Heart right ventricle (tissue), 16 donors: ENCODE measurements at regions of chrX and their contacts with region 1.

Region 1: GRCh38 chrX:75337525-75337924 is 63.6 kb downstream of the UPRT start:
- DNase-seq: no peak
- ATAC-seq: no peak
- H3K4me3 ChIP-seq: no peak overlapping the region
- H3K27ac ChIP-seq: no peak overlapping the region
- H3K4me1 ChIP-seq: no peaks in the 10 kb centered on the region
- H3K27me3 ChIP-seq: no peaks in the 10 kb centered on the region
- CTCF ChIP-seq: no peak

Region 2: DNA sequence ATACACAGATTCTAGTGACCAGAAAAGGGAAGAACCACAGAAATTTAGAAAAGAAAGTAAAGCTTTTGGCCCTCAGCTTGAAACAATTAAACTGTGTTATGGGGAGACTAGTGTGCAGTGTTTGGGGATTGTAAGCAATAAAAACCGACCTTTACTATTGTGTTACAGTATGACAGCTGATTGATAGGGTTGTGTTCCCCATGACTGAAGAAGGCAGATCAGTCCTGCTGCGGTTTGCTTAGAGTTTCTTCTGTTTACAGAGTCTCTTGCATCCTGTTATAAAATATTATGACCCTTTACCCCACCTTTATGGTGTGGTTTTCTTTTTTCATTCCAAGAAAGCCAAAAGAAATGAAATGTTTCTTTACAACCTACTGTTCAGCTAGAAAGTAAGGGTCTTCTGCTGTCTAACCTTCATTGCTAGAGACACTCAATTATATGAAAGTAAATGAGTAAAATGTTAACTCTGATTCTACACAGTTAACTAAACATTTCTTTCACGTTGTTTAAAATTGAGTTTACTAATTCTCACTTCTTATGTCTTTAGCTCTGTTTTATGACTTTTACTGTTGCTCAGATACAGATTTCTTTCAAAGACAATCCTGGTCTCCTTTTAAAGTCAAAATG is 1756.4 kb before region 1 on chrX:
- intact Hi-C with region 1: loop called in 1 of 10 experiments (anchors 5 kb)
- DNase-seq: no peak
- ATAC-seq: no peak
- H3K4me3 ChIP-seq: no peak overlapping the region
- H3K27ac ChIP-seq: no peak overlapping the region
- H3K4me1 ChIP-seq: peaks cover 0 to 4% (median 0%) of the 10 kb centered on the region in 9 donors
- H3K27me3 ChIP-seq: peaks cover 0 to 33% (median 0%) of the 10 kb centered on the region in 7 donors
- CTCF ChIP-seq: no peak